ENCODE measurements at regions of chr10 and their contacts with region 1.

Region 1: GRCh38 chr10:119650692-119651513 is at the start of gene BAG3:
- DNase-seq: peak; percentile 86
- ATAC-seq: peak; percentile 78
- H3K4me3 Mint-ChIP-seq: peak within 1 kb of the TSS; percentile 95
- H3K27ac Mint-ChIP-seq: peak within 1 kb of the TSS; percentile 97
- H3K4me1 Mint-ChIP-seq: peaks cover 41% of the 10 kb centered on the region
- H3K27me3 Mint-ChIP-seq: peaks cover 2% of the 10 kb centered on the region
- total RNA-seq, gene BAG3: 14.2 to 14.7 TPM

Region 2: GRCh38 chr10:119596537-119597404 is 54.1 kb before region 1 on chr10 and contains the start of gene TIAL1:
- CTCF ChIA-PET with region 1: interaction called, 6 read pairs
- POLR2A ChIA-PET with region 1: interaction called, 11 read pairs
- DNase-seq: peak; percentile 97
- ATAC-seq: peak; percentile 89
- H3K4me3 Mint-ChIP-seq: peak within 1 kb of the TSS; percentile 93
- H3K27ac Mint-ChIP-seq: peak within 1 kb of the TSS; percentile 96
- H3K4me1 Mint-ChIP-seq: peaks cover 45% of the 10 kb centered on the region
- H3K27me3 Mint-ChIP-seq: no peaks in the 10 kb centered on the region
- total RNA-seq, gene TIAL1: 173 to 177 TPM

Region 3: DNA sequence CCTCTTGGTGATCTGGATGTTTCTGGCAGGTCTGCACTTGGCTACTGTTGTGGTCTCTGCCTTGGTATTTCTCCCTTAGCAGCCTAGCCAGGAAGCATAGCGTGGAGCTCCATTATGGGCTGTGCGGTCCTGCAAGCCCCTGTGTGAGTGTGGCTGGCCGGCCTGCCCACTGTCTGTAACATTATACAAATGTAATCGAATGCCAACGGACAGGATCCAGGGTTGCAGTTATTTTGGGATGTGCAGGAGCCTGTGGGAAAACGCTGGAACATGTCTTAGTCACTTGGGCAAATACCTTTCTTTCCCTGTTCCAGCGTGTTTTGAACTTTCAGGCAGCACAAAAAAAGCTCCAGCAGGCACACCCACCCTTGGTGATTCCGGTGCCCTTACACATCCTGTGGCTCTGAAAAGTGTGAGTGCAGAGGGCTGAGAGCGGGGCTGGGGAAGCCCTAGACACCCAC is 29.7 kb after region 1 on chr10:
- CTCF ChIA-PET with region 1: no interaction called
- POLR2A ChIA-PET with region 1: no interaction called
- DNase-seq: no peak
- ATAC-seq: no peak
- H3K4me3 Mint-ChIP-seq: no peak overlapping the region
- H3K27ac Mint-ChIP-seq: no peak overlapping the region
- H3K4me1 Mint-ChIP-seq: peaks cover 6% of the 10 kb centered on the region
- H3K27me3 Mint-ChIP-seq: peaks cover 6% of the 10 kb centered on the region

Measured in activated CD8-positive, alpha-beta T cell treated with anti-CD3 and anti-CD28 coated beads, Interleukin-2, amount 10 ng/mL, durations not matched to agents 7 days and 5 days (primary cell).